B cell (primary cell): ENCODE measurements at regions of chr17 and their contacts with region 1.

Region 1: GRCh38 chr17:61966191-61966590 is 38.4 kb upstream of the INTS2 start:
- DNase-seq: no peak
- ATAC-seq: no peak
- H3K4me3 ChIP-seq: no peak overlapping the region
- H3K4me3 Mint-ChIP-seq: no peak overlapping the region
- H3K27ac ChIP-seq: no peak overlapping the region
- H3K27ac Mint-ChIP-seq: no peak overlapping the region
- H3K4me1 ChIP-seq: no peaks in the 10 kb centered on the region
- H3K4me1 Mint-ChIP-seq: no peaks in the 10 kb centered on the region
- H3K27me3 ChIP-seq: no peaks in the 10 kb centered on the region
- H3K27me3 Mint-ChIP-seq: no peaks in the 10 kb centered on the region
- CTCF ChIP-seq: no peak

Region 2: GRCh38 chr17:62017610-62018261 is 51.5 kb after region 1 on chr17:
- CTCF ChIA-PET with region 1: no interaction called
- POLR2A ChIA-PET with region 1: no interaction called
- intact Hi-C with region 1: loop called (anchors 10 kb)
- DNase-seq: no peak
- ATAC-seq: no peak
- H3K4me3 ChIP-seq: no peak overlapping the region
- H3K4me3 Mint-ChIP-seq: no peak overlapping the region
- H3K27ac ChIP-seq: no peak overlapping the region
- H3K27ac Mint-ChIP-seq: no peak overlapping the region
- H3K4me1 ChIP-seq: no peaks in the 10 kb centered on the region
- H3K4me1 Mint-ChIP-seq: no peaks in the 10 kb centered on the region
- H3K27me3 ChIP-seq: no peaks in the 10 kb centered on the region
- H3K27me3 Mint-ChIP-seq: no peaks in the 10 kb centered on the region
- CTCF ChIP-seq: no peak

Region 3: DNA sequence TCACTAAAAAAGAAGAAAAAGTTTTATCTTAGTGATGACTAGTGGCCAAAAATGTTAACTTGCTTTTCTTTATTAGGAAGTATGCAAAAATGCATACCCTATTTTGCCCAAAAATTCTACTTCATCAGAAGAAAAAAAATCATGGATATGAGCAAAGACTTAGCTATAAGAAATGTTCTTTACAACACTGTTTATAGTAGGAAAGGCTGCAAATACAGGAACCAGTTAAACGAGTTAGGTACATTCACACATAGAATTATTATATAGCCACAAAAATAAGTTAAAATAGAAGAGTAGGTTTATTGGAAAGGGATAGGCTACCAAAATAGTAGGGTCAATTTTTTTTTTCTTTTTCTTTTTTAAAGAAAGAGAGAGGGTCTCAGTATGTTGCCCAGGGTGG is 69.4 kb after region 1 on chr17:
- CTCF ChIA-PET with region 1: no interaction called
- POLR2A ChIA-PET with region 1: no interaction called
- intact Hi-C with region 1: no loop called
- DNase-seq: no peak
- ATAC-seq: no peak
- H3K4me3 ChIP-seq: no peak overlapping the region
- H3K4me3 Mint-ChIP-seq: no peak overlapping the region
- H3K27ac ChIP-seq: no peak overlapping the region
- H3K27ac Mint-ChIP-seq: no peak overlapping the region
- H3K4me1 ChIP-seq: peaks cover 0 to 3% of the 10 kb centered on the region in 2 donors
- H3K4me1 Mint-ChIP-seq: peaks cover 19% of the 10 kb centered on the region
- H3K27me3 ChIP-seq: no peaks in the 10 kb centered on the region
- H3K27me3 Mint-ChIP-seq: no peaks in the 10 kb centered on the region
- CTCF ChIP-seq: no peak